ENCODE measurements at regions of chr19 and their contacts with region 1.

Region 1: DNA sequence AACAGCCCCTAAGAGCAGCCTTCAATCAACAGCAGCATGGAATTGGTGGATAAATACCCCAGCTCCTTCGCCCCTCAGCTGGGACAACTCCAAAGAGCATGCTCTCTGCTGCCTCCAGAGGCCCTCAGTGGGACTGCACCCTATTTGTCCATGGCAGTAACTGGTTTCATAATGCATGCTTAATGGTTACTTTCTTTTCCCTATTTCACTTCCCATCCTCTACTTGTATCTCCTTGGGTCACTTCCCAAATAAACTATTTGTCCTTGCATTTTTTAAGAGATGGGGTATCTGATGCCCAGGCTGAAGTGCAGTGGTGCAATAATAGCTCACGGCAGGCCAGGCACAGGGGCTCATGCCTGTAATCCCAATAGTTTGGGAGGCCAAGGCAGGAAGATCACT is 13.5 kb upstream of the TPM4 start:
- DNase-seq: peak in 1 of 2 experiments; percentile 91
- H3K4me3 ChIP-seq: no peak overlapping the region
- H3K27ac ChIP-seq: no peak overlapping the region
- H3K4me1 ChIP-seq: peaks cover 0 to 5% (median 0%) of the 10 kb centered on the region in 4 experiments; a peak in 2 of 7 replicates
- H3K27me3 ChIP-seq: no peaks in the 10 kb centered on the region
- CTCF ChIP-seq: peak; percentile 55 to 94 (median 85)
- EP300 ChIP-seq: no peak
- POLR2A ChIP-seq: no peak
- RAD21 ChIP-seq: peak; percentile 49 to 53

Region 2: DNA sequence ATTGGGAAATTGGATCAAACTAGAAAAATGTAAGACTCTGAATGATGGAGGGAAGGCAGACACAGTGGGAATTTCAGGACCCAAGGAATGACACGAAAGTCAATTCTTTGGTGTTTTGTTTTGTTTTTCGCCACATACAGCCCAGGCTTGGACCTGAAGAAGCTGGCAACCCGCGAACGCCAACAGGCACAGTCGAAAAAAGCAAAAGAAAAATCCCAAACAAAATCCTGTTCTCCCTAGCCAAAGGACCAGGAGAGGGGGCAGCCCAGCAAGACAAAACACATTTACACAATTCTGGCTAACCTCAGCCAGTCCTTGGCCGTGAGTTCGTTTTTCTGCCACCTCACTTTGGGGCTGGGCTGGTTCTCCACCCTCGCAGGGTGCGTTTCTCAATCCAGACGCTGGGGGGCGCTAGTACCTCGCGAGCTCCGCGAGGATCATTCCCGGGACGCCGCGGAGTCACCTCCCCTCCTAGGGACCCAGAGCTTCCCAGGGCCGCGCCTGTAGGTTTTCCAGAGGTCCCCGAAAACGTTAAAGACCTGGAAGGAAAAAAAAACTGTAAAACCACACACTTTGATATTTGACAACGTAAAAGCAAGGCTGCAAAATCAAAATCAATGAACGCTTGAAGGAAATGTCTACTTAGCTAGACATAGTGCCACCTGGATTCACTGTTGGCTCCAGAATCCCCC is 21.3 kb before region 1 on chr19:
- CTCF ChIA-PET with region 1: interaction called, 38 read pairs
- POLR2A ChIA-PET with region 1: no interaction called
- DNase-seq: peak; percentile 50 to 99
- H3K4me3 ChIP-seq: peak overlapping the region in 1 of 4 experiments; percentile 13; a peak in 1 of 8 replicates
- H3K27ac ChIP-seq: no peak overlapping the region
- H3K4me1 ChIP-seq: no peaks in the 10 kb centered on the region
- H3K27me3 ChIP-seq: no peaks in the 10 kb centered on the region
- CTCF ChIP-seq: peak; percentile 91 to 93 (median 92)
- EP300 ChIP-seq: no peak
- POLR2A ChIP-seq: no peak
- RAD21 ChIP-seq: peak; percentile 93 to 95

Region 3: DNA sequence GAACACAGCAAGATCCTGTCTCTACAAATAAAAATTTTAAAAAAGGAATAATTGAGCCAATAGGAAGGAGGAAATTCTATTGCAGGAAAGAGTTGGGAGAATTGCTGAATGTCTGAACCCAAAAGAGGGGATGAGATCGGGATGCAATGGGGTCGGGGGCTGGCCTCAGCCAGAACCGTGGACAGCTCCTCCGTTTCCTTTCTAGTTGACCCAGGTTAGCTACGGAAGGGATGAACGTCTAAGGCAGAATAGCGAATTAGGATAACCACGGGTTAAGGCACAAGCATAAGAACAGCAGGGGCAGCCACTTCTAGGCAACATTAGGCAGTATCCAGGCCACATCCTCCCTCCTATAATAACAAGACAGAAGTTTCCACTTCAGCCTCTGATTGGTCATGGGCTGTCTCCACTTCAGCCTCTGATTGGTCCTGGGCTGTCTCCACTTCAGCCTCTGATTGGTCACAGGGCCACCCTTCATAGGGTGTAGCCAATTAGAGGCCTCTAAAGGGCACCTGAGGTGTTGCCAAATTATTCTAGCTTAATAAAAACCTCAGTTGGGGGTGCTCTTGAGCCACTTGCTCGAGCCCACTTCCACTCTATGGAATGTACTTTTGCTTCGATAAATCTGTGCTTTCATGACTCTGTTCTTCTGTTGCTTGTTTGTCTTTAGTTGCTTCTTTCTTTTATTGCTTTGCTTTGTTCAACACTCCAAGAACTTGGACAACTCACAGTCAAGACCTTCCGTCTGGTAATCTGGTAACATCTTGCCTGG is 11.3 kb before region 1 on chr19:
- CTCF ChIA-PET with region 1: interaction called, 39 read pairs
- POLR2A ChIA-PET with region 1: no interaction called
- DNase-seq: no peak
- H3K4me3 ChIP-seq: no peak overlapping the region
- H3K27ac ChIP-seq: no peak overlapping the region
- H3K4me1 ChIP-seq: no peaks in the 10 kb centered on the region
- H3K27me3 ChIP-seq: no peaks in the 10 kb centered on the region
- CTCF ChIP-seq: no peak
- EP300 ChIP-seq: no peak
- POLR2A ChIP-seq: no peak
- RAD21 ChIP-seq: no peak